ENCODE measurements at regions of chr1 and their contacts with region 1.

Region 1: GRCh38 chr1:19918057-19918456 is 5.4 kb downstream of the PLA2G2E start:
- DNase-seq: peak; percentile 85 to 90 (median 86)
- ATAC-seq: peak; percentile 89
- H3K4me3 ChIP-seq: no peak overlapping the region
- H3K27ac ChIP-seq: no peak overlapping the region
- H3K4me1 ChIP-seq: peaks cover 0 to 6% of the 10 kb centered on the region in 2 experiments; a peak in 2 of 5 replicates
- H3K27me3 ChIP-seq: peaks cover 9 to 32% of the 10 kb centered on the region in 2 experiments; a peak in 4 of 5 replicates
- CTCF ChIP-seq: peak; percentile 94 to 97 (median 95)
- EP300 ChIP-seq: no peak
- POLR2A ChIP-seq: no peak
- RAD21 ChIP-seq: peak; percentile 94 to 98

Region 2: DNA sequence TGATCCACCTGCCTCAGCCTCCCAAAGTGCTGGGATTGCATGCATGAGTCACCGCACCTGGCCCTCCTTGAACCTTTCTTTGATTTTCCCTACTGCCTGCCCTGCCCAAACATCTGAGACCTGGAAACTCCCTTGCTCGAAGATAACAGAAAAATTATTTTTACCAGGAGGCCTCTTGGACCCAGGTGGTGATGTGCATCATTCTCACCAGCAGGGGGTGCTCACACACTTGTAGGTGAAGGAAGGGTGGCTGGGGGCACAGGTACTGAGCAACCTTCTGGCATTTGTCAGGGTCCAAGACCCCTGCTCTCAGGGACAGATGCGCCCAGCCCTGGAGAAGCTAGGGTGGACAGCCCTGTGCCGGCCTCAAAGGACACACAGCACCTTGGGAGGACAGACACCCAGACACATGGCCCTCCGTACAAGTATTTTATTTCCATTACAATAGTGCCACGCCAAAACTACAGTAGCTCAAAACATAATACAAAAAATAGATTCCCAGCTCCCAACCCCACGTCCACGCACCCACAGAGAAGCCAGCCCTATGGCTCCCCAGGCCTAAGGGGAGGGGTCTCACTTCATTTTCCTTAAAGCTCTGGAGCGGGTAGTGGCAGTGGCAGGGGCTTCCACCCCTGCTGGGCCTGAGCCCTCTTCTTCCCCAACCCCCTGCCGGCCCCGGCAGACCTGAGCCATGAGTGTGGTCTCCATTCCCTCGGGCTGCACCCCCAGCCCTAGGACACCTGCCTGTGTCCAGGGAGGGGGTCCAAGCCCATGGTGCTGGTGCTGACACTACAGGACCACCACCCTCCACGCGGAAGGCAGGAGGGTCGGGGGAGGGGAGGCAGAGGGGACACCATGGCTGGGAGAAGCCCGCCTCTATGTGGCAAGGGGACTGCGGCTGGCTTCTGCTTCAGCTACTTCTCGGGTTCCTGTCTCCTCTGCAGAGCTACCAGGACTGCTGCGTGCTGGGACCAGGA is 1299.1 kb after region 1 on chr1:
- CTCF ChIA-PET with region 1: no interaction called
- POLR2A ChIA-PET with region 1: no interaction called
- in situ Hi-C with region 1: loop called (anchors 25 kb)
- intact Hi-C with region 1: no loop called
- DNase-seq: peak; percentile 75 to 84 (median 81)
- ATAC-seq: peak; percentile 84
- H3K4me3 ChIP-seq: no peak overlapping the region
- H3K27ac ChIP-seq: no peak overlapping the region
- H3K4me1 ChIP-seq: peaks cover 3 to 19% of the 10 kb centered on the region in 2 experiments; a peak in 4 of 5 replicates
- H3K27me3 ChIP-seq: 0 out of 5 replicates have a peak, but pooled peaks cover 0 to 7% of the 10 kb centered on the region in 2 experiments
- CTCF ChIP-seq: peak; percentile 85 to 95 (median 89)
- EP300 ChIP-seq: no peak
- POLR2A ChIP-seq: no peak
- RAD21 ChIP-seq: peak; percentile 40 to 76